ENCODE measurements at regions of chr7 and their contacts with region 1.

Region 1: DNA sequence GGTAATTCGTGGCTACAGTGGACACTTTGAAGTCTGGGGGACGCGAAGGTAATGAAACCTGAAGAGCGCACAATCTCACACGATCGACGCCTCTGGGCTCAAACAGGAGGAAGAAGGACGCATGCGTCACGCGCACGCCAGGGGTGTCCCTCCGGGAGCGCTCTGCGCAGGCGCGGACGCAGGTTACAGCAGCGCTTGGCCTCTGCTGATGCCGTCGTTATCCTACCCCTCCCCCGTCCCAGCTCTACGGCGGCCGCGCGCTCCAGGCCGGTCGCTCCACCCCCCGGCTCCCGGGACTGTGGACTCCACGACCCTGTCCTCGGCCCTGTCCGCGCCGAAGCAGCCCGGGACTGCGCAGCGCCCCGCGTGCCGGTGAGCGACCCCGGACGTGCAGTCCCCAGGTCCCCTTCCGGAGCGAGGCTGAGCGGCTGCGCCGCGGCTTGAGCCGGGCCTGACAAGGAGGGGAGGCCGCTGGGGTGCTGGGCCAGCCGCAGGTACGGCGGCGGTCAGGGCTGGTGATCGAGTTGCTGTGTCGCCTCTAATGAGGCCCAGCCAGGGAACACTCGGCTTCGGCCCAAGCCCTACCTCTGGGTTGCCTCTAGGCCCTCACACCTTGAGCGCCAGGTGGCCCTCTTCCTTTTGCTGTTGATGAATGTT is at the start of gene TMEM106B:
- DNase-seq: peak; percentile 93 to 98
- H3K4me3 ChIP-seq: peak within 1 kb of the TSS; percentile 74
- H3K27ac ChIP-seq: peak within 1 kb of the TSS; percentile 92
- H3K4me1 ChIP-seq: peaks cover 24% of the 10 kb centered on the region
- H3K27me3 ChIP-seq: no peaks in the 10 kb centered on the region
- CTCF ChIP-seq: peak; percentile 44; the same call in 1 of the 2 replicates
- total RNA-seq, gene TMEM106B: 61.1 and 64.4 TPM in 2 replicates

Region 2: GRCh38 chr7:12067141-12067831 is 143.9 kb before region 1 on chr7:
- CTCF ChIA-PET with region 1: interaction called, 5 read pairs
- POLR2A ChIA-PET with region 1: no interaction called
- intact Hi-C with region 1: loop called (anchors 1 kb)
- DNase-seq: peak in 1 of 2 experiments; percentile 72
- H3K4me3 ChIP-seq: no peak overlapping the region
- H3K27ac ChIP-seq: peak overlapping the region; percentile 99
- H3K4me1 ChIP-seq: peaks cover 23% of the 10 kb centered on the region
- H3K27me3 ChIP-seq: no peaks in the 10 kb centered on the region
- CTCF ChIP-seq: peak; percentile 61

Region 3: GRCh38 chr7:12139409-12139808 is 71.8 kb before region 1 on chr7:
- CTCF ChIA-PET with region 1: no interaction called
- POLR2A ChIA-PET with region 1: no interaction called
- intact Hi-C with region 1: loop called (anchors 2 kb)
- DNase-seq: peak in 1 of 2 experiments; percentile 42
- H3K4me3 ChIP-seq: no peak overlapping the region
- H3K27ac ChIP-seq: no peak overlapping the region
- H3K4me1 ChIP-seq: no peaks in the 10 kb centered on the region
- H3K27me3 ChIP-seq: no peaks in the 10 kb centered on the region
- CTCF ChIP-seq: no peak

Region 4: GRCh38 chr7:12229046-12229445 is 17.9 kb after region 1 on chr7:
- CTCF ChIA-PET with region 1: no interaction called
- POLR2A ChIA-PET with region 1: interaction called, 12 read pairs
- intact Hi-C with region 1: no loop called
- DNase-seq: no peak
- H3K4me3 ChIP-seq: no peak overlapping the region
- H3K27ac ChIP-seq: no peak overlapping the region
- H3K4me1 ChIP-seq: no peaks in the 10 kb centered on the region
- H3K27me3 ChIP-seq: no peaks in the 10 kb centered on the region
- CTCF ChIP-seq: no peak

Region 5: DNA sequence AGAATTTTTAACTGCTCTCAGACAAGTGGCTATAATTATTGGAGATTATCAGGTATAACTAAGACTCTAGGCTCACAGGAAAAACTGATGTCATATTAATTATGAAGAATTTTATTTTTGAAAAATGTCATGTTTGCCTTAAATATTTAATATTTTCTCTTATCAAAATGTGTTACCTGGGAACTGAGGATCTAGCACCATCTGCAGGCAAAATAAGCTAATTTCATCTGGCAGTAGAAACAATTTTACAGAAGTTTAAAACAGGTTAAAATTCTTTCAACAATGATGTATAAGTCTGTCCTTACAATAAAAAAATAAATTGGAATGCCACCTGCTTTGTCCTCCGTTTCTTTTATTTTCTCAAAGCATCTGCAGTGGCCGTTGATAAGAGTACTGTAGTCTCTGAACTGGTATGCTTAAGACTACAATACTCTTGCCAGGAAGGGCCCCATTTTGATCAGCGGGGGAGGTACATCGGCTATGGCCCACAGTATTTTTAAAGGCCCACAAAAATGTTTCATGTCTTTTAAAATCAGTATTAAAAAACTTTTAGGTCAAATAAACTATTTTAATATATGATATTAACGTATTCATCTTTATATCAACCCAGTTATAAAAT is 111.2 kb after region 1 on chr7:
- CTCF ChIA-PET with region 1: no interaction called
- POLR2A ChIA-PET with region 1: no interaction called
- intact Hi-C with region 1: loop called (anchors 1 kb)
- DNase-seq: no peak
- H3K4me3 ChIP-seq: no peak overlapping the region
- H3K27ac ChIP-seq: no peak overlapping the region
- H3K4me1 ChIP-seq: no peaks in the 10 kb centered on the region
- H3K27me3 ChIP-seq: no peaks in the 10 kb centered on the region
- CTCF ChIP-seq: peak; percentile 88

Region 6: GRCh38 chr7:12351843-12352242 is 140.7 kb after region 1 on chr7:
- CTCF ChIA-PET with region 1: no interaction called
- POLR2A ChIA-PET with region 1: no interaction called
- intact Hi-C with region 1: no loop called
- DNase-seq: no peak
- H3K4me3 ChIP-seq: no peak overlapping the region
- H3K27ac ChIP-seq: no peak overlapping the region
- H3K4me1 ChIP-seq: no peaks in the 10 kb centered on the region
- H3K27me3 ChIP-seq: no peaks in the 10 kb centered on the region
- CTCF ChIP-seq: no peak

Region 7: DNA sequence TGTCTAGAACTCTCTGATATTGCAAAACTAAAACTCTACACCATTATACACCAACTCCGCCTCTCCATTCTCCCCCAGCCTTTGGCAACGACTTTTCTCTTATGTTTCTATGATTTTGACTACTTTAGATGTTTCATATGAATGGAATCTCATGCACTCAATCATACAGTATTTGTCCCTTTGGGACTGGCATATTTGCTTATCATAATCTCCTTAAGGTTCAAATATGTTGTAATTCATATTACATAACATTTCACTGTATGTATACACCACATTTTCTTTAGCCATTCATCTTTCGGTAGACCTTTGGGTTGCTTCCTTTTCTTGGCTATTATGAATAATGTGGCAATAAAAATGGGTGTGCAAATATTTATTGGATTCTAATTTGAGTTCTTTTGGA is 640.7 kb after region 1 on chr7:
- CTCF ChIA-PET with region 1: no interaction called
- POLR2A ChIA-PET with region 1: no interaction called
- intact Hi-C with region 1: no loop called
- DNase-seq: peak in 1 of 2 experiments; percentile 3
- H3K4me3 ChIP-seq: no peak overlapping the region
- H3K27ac ChIP-seq: no peak overlapping the region
- H3K4me1 ChIP-seq: no peaks in the 10 kb centered on the region
- H3K27me3 ChIP-seq: no peaks in the 10 kb centered on the region
- CTCF ChIP-seq: no peak

Measured in PC-9 (cell line).